ENCODE measurements at regions of chr3 and their contacts with region 1.

Region 1: GRCh38 chr3:138935848-138936740 is 10.8 kb downstream of the FOXL2 start:
- DNase-seq: peak; percentile 88

Region 2: DNA sequence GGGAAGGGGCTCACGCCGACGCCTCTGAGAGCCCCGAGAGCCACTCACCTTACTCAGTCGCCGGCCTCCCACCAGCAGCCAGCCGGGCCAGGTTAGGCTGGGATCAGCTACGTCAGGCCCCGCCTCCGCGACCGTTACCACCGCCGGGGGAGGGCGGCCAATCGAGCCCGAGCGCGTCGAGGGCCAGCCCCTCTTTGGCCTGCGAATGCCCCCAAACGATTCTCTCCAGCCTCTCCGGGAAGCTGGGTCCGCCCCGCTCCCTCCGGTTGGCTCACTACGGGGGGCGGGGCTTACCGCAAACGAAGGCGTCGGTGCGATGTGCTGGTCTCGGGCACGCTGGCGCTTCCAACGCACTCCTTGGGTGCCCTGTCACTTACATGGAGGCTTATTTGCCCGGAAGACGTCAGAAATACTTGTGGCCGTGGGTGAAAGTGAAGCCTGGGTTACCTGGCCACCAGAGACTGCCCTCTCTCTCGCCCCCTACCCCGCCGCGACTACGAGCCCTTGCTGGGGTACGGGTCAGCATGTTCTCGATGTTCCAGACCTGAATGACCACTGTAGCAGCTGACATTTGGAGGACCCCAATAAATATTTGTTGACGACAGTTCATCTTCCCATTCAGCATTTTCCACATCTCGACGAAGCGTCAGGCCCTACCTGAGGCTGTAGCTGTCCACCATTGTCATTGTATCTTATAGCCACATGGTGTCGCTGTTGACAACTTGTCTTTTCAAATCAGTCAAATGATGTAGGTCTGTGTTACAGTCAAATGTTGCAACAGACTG is 341.8 kb before region 1 on chr3 and contains the start of gene CEP70:
- intact Hi-C with region 1: no loop called
- DNase-seq: peak; percentile 95
- total RNA-seq, gene CEP70: 22.0 TPM

Region 3: GRCh38 chr3:138786788-138787278 is 149.3 kb before region 1 on chr3:
- intact Hi-C with region 1: no loop called
- DNase-seq: no peak

Region 4: DNA sequence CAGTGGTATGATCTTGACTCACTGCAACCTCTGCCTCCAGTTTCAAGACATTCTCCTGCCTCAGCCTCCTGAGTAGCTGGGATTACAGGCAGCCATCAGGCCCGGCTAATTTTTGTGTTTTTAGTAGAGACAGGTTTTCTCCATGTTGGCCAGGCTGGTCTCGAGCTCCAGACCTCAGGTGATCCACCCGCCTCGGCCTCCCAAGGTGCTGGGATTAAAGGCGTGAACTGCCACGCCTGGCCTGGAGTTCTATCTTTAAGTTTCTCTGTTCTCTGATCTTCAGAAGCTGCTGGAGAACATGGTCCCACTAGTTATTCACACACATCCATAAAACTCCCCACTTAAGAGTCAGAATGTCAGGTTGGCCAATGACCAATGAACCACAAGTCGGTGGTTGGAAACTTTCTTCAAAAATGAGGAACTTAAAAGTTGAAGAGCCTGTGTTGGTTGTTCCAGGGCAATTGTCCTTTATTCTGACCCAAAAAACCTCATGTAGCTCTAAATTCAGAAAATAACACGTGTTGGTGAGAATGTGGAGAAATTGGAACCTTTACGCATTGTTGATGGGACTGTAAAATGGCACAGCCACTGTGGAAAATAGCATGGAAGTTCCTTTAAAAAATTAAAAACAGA is 45.4 kb before region 1 on chr3:
- intact Hi-C with region 1: no loop called
- DNase-seq: no peak

Region 5: GRCh38 chr3:138975351-138975750 is 39.3 kb after region 1 on chr3:
- intact Hi-C with region 1: loop called (anchors 5 kb)
- DNase-seq: peak; percentile 14

Region 6: GRCh38 chr3:139329345-139329850 is 393.3 kb after region 1 on chr3:
- intact Hi-C with region 1: loop called (anchors 1 kb)
- DNase-seq: peak; percentile 92